ENCODE measurements at regions of chr1 and their contacts with region 1.

Region 1: DNA sequence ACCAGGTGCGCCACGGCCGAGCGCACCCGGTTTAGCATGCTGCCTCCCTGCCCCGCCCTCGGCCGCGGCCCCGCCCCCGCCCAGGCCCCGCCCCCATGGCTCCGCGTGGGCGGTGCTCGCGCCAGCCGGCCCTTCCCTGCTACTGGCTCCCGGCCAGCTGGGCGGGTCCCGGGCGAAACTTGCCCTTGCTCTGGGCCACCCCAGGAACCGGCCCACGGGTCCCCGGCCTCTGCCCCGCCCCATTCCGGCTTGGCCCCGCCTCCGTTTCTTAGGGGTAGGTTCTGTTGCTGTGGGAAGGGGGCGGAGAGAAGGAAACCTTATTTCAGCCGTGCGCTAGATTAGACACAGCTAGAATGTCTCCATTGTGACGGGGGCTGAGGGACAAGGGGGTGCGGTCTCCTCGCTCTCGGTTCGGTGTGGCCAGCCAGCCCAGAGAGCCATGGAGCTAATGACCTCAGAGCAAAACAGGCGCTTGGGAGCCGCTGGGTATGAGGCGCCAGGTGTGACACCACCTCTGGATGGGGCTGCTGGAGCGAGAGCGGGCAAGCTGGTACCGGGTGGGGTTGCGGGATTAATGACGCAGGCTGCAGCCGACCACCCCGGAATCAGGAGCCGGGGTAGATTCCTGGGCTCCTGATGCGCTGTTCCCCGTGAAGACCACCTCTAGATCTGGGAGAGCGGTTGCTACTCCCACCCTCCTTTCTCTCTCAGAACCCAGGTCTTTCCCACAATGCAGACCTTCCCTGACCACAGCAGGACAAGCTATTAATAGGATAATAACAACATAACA is at the start of gene PPM1J:
- DNase-seq: peak; percentile 97
- H3K4me3 Mint-ChIP-seq: peak within 1 kb of the TSS; percentile 81
- H3K27ac Mint-ChIP-seq: peak within 1 kb of the TSS; percentile 21
- H3K4me1 Mint-ChIP-seq: peaks cover 24% of the 10 kb centered on the region
- H3K27me3 Mint-ChIP-seq: peaks cover 33% of the 10 kb centered on the region
- total RNA-seq, gene PPM1J: 0.59 and 0.67 TPM in 2 replicates

Region 2: GRCh38 chr1:112803906-112804762 is 88.7 kb after region 1 on chr1:
- intact Hi-C with region 1: loop called (anchors 1 kb)
- DNase-seq: peak; percentile 42
- H3K4me3 Mint-ChIP-seq: no peak overlapping the region
- H3K27ac Mint-ChIP-seq: no peak overlapping the region
- H3K4me1 Mint-ChIP-seq: no peaks in the 10 kb centered on the region
- H3K27me3 Mint-ChIP-seq: peaks cover 11% of the 10 kb centered on the region

Region 3: DNA sequence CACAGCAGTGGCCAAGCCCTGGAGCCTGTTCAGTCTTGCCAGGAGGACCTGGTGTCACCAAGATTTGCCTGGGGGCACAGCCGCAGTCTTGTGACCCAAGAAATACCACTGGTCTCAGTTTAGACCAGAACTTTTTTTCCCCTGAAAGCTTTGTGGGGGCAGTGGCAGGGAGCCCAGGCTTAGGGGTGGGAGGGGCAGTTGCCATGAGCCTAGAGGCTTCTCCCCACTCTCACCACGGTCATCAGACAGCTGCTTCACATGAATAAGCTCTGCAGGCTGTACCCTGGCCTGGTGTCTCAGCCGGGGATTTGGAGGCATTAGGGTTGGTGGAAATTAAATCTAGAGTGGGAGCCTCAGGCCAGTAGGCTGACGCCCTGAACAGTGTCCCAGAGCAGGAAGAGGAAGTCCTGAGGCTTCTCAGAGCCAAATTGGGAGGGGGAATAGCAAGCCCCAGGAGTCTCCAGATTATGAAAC is 166.8 kb after region 1 on chr1:
- intact Hi-C with region 1: loop called (anchors 5 kb)
- DNase-seq: no peak
- H3K4me3 Mint-ChIP-seq: no peak overlapping the region
- H3K27ac Mint-ChIP-seq: no peak overlapping the region
- H3K4me1 Mint-ChIP-seq: peaks cover 3% of the 10 kb centered on the region
- H3K27me3 Mint-ChIP-seq: peaks cover 14% of the 10 kb centered on the region

Region 4: DNA sequence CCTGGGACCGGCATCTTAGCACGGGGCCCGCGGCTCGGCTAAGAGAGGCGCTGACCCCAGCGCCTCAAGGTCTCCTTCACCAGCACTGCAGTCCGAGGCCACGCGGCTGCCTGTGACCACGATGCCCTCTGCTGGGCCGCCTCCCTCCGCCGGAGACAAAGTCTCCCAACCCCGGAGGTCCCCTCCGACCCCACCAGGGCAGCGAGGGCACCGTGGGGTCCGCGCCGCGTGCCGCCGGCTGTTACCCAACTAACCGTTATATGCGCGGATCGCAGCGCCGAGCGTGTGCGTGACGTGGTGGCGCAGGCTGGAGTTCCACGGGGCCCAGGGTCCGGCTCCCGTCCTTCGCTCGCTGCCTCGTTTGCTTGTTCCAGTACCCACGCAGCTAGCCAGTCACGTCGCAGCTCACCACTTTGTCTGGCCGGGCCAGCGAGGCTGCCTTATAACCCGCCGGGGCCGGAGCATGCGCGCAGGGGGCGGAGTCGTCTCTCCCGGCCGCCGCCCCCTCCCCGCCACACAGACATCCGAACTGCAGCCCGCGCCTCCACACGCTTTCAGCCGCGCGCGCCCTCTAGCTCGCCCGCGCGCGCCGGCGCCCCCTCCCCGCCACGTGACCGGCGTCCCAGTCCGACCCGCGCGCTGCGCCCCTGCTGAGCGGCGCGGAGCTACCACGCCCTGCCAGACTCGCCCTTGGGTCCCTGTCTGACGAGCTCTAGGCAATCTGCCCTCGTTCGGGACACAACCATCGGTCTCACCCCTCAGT is 240.5 kb after region 1 on chr1 and contains the start of gene SLC16A1:
- intact Hi-C with region 1: loop called (anchors 2 kb)
- DNase-seq: peak; percentile 88
- H3K4me3 Mint-ChIP-seq: peak within 1 kb of the TSS; percentile 100
- H3K27ac Mint-ChIP-seq: peak within 1 kb of the TSS; percentile 100
- H3K4me1 Mint-ChIP-seq: peaks cover 56% of the 10 kb centered on the region
- H3K27me3 Mint-ChIP-seq: no peaks in the 10 kb centered on the region
- total RNA-seq, gene SLC16A1: 75.8 and 77.1 TPM in 2 replicates

Region 5: DNA sequence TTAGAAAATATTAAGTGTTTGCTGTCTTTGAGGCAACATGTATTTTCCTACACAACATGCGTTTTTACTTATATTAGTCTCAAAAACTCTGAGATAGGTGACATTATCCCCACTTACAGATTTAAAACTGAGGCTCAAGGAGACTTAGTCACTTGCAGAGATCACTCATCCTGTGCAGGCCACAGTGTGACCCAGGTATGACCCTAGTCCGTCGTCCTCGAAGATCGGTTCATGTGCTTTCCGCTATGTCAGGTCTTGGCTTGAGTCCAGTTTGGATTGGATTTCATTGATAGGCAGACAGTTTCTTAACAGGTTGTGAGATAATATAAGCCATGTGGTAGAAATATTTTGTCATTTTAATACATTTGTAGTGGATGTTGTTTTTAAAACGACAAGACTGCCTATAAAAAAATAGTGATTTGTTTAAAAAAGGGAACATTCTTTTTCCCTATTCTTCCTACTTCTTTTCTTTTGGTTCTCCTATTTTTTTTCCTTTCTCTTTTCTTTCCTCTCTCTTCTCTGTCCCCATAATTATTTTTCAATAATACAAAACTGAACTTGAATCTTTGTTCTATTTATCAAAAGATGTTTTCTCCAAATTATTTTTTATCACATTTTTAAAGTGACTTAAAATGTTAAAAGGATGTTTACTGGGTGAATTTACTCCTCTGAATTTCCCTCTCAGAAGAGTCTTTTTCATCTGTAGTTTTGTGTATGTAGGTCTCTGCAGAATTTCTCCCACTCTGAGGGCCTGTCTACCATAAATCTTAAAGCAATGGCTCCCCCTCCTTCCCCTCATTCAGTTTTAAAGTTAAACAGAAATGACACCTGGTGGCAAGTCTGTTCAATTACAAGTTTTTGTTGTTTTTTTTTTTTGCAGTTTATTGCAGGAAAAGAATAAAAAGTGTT is 962.0 kb after region 1 on chr1:
- intact Hi-C with region 1: loop called (anchors 2 kb)
- DNase-seq: no peak
- H3K4me3 Mint-ChIP-seq: no peak overlapping the region
- H3K27ac Mint-ChIP-seq: no peak overlapping the region
- H3K4me1 Mint-ChIP-seq: peaks cover 15% of the 10 kb centered on the region
- H3K27me3 Mint-ChIP-seq: peaks cover 2% of the 10 kb centered on the region